Heart right ventricle (tissue), 16 donors: ENCODE measurements at regions of chr3 and their contacts with region 1.

Region 1: GRCh38 chr3:45778761-45779201 is 17.6 kb downstream of the SLC6A20 start:
- DNase-seq: no peak
- ATAC-seq: no peak
- H3K4me3 ChIP-seq: no peak overlapping the region
- H3K27ac ChIP-seq: no peak overlapping the region
- H3K4me1 ChIP-seq: peaks cover 0 to 5% (median 0%) of the 10 kb centered on the region in 9 donors
- H3K27me3 ChIP-seq: no peaks in the 10 kb centered on the region
- CTCF ChIP-seq: no peak

Region 2: GRCh38 chr3:45479621-45480035 is 299.2 kb before region 1 on chr3:
- intact Hi-C with region 1: no loop called
- DNase-seq: no peak
- ATAC-seq: no peak
- H3K4me3 ChIP-seq: no peak overlapping the region
- H3K27ac ChIP-seq: no peak overlapping the region
- H3K4me1 ChIP-seq: peaks cover 0 to 6% (median 0%) of the 10 kb centered on the region in 9 donors
- H3K27me3 ChIP-seq: no peaks in the 10 kb centered on the region
- CTCF ChIP-seq: no peak

Region 3: DNA sequence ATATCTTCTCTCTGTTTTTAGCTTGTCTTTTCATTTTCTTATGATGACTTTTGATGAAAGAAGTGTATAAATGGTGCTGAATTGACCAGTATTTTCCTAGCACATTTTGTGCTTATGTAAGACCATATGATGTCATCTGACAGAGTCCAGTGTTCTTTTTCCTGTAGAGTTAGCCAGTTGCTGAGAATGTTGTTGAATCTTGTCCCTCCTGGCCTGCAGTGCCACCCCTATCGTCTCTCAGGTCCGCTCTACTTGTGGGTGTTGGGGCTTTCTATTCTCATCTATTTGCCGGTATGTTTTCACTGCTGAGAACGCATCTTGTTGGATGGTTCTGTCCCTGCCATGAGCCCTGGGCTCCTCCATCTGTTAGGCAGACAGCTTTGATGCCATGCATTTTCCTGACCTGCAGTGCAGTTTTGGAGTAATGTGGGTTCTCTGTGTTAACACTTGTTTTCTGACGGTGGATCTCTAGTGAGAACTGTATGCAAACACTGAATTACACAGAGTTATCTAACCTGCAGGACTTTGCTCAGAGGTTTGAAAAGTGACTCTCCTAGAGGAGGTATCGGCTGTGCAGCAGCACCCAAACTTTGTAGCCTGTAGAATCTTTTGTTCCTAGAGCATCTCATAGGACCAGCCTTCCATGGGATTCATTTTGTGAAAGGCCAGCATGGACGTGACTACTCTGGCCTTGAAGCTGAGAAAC is 27.1 kb before region 1 on chr3:
- intact Hi-C with region 1: loop called in 1 of 10 experiments (anchors 1 kb)
- DNase-seq: no peak
- ATAC-seq: no peak
- H3K4me3 ChIP-seq: no peak overlapping the region
- H3K27ac ChIP-seq: no peak overlapping the region
- H3K4me1 ChIP-seq: peaks cover 0 to 3% (median 0%) of the 10 kb centered on the region in 9 donors
- H3K27me3 ChIP-seq: no peaks in the 10 kb centered on the region
- CTCF ChIP-seq: no peak